ENCODE measurements at regions of chr17 and their contacts with region 1.

Region 1: DNA sequence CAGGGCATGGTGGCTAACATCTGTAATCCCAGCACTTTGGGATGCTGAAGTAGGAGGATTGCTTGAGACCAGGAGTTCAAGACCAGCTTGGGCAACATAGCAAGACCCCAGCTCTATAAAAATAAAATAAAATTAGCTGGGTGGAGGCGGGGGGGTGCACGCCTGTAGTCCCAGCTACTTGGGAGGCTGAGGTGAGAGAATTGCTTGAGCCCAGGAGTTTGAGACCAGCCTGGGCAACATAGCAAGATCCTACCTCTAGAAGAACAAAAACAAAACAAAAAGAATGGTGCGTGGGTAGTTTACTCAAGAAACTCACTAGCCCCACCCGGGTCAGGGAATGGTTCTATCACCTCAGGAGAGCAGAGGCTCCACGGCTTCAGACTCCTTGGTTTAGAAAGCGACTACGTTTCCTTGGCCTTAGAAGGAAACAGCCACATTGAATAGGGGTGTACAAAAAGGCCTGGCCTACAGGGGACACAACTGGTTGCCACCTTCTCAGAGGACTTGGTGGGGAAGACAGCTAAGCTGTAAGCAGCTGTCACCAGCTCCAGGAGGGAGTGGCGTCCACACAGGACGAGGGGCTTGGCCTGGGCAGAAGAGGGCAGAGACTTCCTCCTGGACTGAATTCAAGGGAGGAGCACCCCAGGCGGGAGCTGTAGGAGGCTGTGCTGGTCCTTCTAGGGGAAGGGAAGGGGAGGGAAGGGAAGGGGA is 716 bp downstream of the TK1 start:
- DNase-seq: no peak
- H3K4me3 ChIP-seq: peak overlapping the region in 10 of 59 donors; percentile 67 to 79 (median 74)
- H3K27ac ChIP-seq: peak overlapping the region in 1 of 59 donors; percentile 33
- H3K27me3 ChIP-seq: no peaks in the 10 kb centered on the region
- CTCF ChIP-seq: no peak

Region 2: GRCh38 chr17:78241277-78242023 is 55.3 kb after region 1 on chr17:
- intact Hi-C with region 1: loop called in 1 of 2 experiments (anchors 2 kb)
- DNase-seq: peak in 7 of 10 donors; percentile 62 to 93 (median 86)
- H3K4me3 ChIP-seq: no peak overlapping the region
- H3K27ac ChIP-seq: peak overlapping the region; percentile 14 to 100 (median 99)
- H3K27me3 ChIP-seq: no peaks in the 10 kb centered on the region
- CTCF ChIP-seq: peak in 2 of 56 donors; percentile 9 to 12